Left cardiac atrium (tissue), 4 donors: ENCODE measurements at regions of chr1 and their contacts with region 1.

Region 1: DNA sequence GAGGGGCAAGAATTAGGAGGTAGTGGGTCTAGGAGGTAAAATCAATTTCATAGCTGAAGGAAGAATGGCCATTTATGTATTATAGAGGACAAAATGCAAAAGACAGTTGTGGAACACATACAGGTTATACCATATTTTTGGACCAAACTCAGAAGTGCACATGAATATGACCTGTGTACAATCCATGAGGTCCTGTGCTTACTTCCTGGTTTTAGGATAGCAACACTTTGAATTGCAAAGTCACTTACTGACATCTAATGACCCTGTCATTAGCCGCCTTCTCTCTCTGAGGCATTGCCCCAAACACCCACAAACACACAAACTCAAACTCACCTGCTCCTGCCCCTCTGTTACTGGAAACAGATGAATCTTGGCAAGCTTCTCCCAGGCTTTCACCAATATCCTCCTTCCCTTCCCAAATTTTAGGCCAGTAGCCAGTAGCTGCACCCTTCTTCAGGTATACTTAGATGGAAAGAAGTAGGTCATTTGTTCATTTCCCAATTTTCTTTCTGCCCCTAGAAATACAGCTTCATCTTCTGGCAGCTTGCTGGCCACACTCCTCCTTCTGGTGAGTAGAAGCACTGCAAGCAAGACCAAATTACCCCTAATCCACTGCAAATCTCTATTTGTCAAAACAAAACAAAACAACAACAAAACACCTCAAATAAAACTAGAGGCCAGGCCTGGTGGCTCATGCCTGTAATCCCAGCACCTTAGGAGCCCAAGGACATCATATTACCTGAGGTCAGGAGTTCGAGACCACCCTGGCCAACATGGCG is 13.7 kb upstream of the RPL5 start:
- DNase-seq: no peak
- ATAC-seq: peak in 1 of 2 donors; percentile 41

Region 2: GRCh38 chr1:92749024-92749634 is 69.0 kb before region 1 on chr1:
- intact Hi-C with region 1: loop called (anchors 2 to 10 kb)
- DNase-seq: no peak
- ATAC-seq: peak; percentile 53 to 59

Region 3: GRCh38 chr1:92754000-92754718 is 64.0 kb before region 1 on chr1:
- intact Hi-C with region 1: loop called (anchors 2 to 10 kb)
- DNase-seq: no peak
- ATAC-seq: peak in 1 of 2 donors; percentile 8

Region 4: DNA sequence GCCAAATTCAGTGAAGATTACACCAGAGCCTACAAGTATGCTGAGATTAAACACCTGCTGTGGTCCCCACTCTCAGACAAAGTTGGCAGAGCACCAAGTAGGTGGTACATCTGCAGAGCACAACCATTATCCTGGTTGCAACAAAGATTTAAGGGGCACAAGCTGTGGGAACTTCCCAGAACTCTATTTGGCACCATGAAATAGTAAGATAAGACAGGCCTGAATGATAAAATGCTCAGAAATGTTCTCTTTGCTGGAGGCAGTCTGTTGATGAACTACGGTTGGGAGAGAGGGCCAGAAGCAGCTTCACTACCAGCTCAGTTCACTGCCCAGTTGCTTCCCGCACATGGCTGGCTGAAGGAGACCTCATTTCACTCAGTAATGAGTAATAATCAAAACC is 33.6 kb after region 1 on chr1:
- intact Hi-C with region 1: no loop called
- DNase-seq: no peak
- ATAC-seq: peak in 1 of 2 donors; percentile 67